ENCODE measurements at regions of chr2 and their contacts with region 1.

Region 1: GRCh38 chr2:121095257-121096080 is 189.5 kb downstream of the TFCP2L1 start:
- DNase-seq: no peak
- H3K4me3 ChIP-seq: no peak overlapping the region
- H3K27ac ChIP-seq: no peak overlapping the region
- H3K4me1 ChIP-seq: peaks cover 0 to 13% (median 0%) of the 10 kb centered on the region in 3 donors
- H3K27me3 ChIP-seq: peaks cover 0 to 34% (median 0%) of the 10 kb centered on the region in 4 donors
- CTCF ChIP-seq: peak; percentile 43 to 92 (median 80)
- POLR2A ChIP-seq: no peak

Region 2: GRCh38 chr2:121197369-121198091 is 102.1 kb after region 1 on chr2:
- intact Hi-C with region 1: no loop called
- DNase-seq: peak; percentile 6
- H3K4me3 ChIP-seq: no peak overlapping the region
- H3K27ac ChIP-seq: peak overlapping the region; percentile 92 to 95 (median 94)
- H3K4me1 ChIP-seq: peaks cover 26 to 71% (median 28%) of the 10 kb centered on the region in 3 donors
- H3K27me3 ChIP-seq: no peaks in the 10 kb centered on the region
- CTCF ChIP-seq: no peak
- POLR2A ChIP-seq: peak in 1 of 4 donors; percentile 20

Region 3: GRCh38 chr2:121356058-121356640 is 260.7 kb after region 1 on chr2:
- intact Hi-C with region 1: loop called (anchors 5 kb)
- DNase-seq: no peak
- H3K4me3 ChIP-seq: no peak overlapping the region
- H3K27ac ChIP-seq: no peak overlapping the region
- H3K4me1 ChIP-seq: peaks cover 0 to 25% (median 4%) of the 10 kb centered on the region in 3 donors
- H3K27me3 ChIP-seq: no peaks in the 10 kb centered on the region
- CTCF ChIP-seq: peak; percentile 18 to 74 (median 60)
- POLR2A ChIP-seq: no peak

Measured in esophagus squamous epithelium (tissue), 5 donors.